Mammary epithelial cell (primary cell): ENCODE measurements at regions of chr4 and their contacts with region 1.

Region 1: GRCh38 chr4:40736910-40737309 is 12.8 kb upstream of the NSUN7 start:
- DNase-seq: peak; percentile 31
- H3K4me3 ChIP-seq: no peak overlapping the region
- H3K27ac ChIP-seq: no peak overlapping the region
- H3K4me1 ChIP-seq: no peaks in the 10 kb centered on the region
- H3K27me3 ChIP-seq: no peaks in the 10 kb centered on the region
- CTCF ChIP-seq: peak; percentile 19 to 47

Region 2: GRCh38 chr4:40897557-40898203 is 160.8 kb after region 1 on chr4:
- CTCF ChIA-PET with region 1: no interaction called
- dilution Hi-C with region 1: no loop called
- in situ Hi-C with region 1: no loop called
- intact Hi-C with region 1: loop called (anchors 1 kb)
- DNase-seq: peak; percentile 23
- H3K4me3 ChIP-seq: no peak overlapping the region
- H3K27ac ChIP-seq: no peak overlapping the region
- H3K4me1 ChIP-seq: no peaks in the 10 kb centered on the region
- H3K27me3 ChIP-seq: no peaks in the 10 kb centered on the region
- CTCF ChIP-seq: peak; percentile 71 to 77

Region 3: GRCh38 chr4:40924096-40924792 is 187.3 kb after region 1 on chr4:
- CTCF ChIA-PET with region 1: no interaction called
- dilution Hi-C with region 1: no loop called
- in situ Hi-C with region 1: no loop called
- intact Hi-C with region 1: loop called (anchors 1 kb)
- DNase-seq: no peak
- H3K4me3 ChIP-seq: no peak overlapping the region
- H3K27ac ChIP-seq: no peak overlapping the region
- H3K4me1 ChIP-seq: no peaks in the 10 kb centered on the region
- H3K27me3 ChIP-seq: no peaks in the 10 kb centered on the region
- CTCF ChIP-seq: peak; percentile 86 to 90

Region 4: DNA sequence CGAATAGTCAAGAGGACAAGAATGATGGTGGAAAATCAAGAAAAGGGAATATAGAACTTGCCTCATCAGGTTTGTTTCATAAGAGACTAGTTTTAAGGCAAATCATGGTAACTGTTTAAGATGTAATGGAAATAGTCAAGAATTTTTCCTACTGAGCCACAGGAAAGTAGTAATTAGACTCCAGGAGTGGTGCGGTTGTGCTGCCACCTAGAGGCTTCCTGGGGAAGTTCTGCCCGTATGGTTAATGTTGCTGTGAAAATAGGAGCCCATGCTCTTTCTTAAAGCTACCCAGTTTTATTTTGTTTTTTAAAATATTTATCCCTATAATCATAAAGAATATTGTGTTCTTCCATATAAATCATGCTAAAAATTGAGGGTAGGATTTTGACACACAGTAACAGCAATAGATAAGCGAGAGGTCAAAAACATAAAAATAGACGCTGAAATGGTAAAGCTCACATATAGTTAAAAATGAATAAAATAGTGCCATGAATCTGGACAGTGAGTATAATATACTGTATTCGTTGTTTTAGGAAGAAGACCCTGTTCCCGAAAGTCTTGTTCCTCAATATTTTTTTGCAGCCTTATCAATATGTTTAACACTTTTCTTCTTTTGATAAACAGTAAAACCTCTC is 924.6 kb after region 1 on chr4:
- CTCF ChIA-PET with region 1: no interaction called
- dilution Hi-C with region 1: no loop called
- in situ Hi-C with region 1: no loop called
- intact Hi-C with region 1: loop called (anchors 10 kb)
- DNase-seq: peak; percentile 19
- H3K4me3 ChIP-seq: no peak overlapping the region
- H3K27ac ChIP-seq: no peak overlapping the region
- H3K4me1 ChIP-seq: peaks cover 6% of the 10 kb centered on the region
- H3K27me3 ChIP-seq: peaks cover 4% of the 10 kb centered on the region
- CTCF ChIP-seq: peak; percentile 94 to 95